Posterior vena cava (tissue), 2 donors: ENCODE measurements at regions of chr9 and their contacts with region 1.

Region 1: DNA sequence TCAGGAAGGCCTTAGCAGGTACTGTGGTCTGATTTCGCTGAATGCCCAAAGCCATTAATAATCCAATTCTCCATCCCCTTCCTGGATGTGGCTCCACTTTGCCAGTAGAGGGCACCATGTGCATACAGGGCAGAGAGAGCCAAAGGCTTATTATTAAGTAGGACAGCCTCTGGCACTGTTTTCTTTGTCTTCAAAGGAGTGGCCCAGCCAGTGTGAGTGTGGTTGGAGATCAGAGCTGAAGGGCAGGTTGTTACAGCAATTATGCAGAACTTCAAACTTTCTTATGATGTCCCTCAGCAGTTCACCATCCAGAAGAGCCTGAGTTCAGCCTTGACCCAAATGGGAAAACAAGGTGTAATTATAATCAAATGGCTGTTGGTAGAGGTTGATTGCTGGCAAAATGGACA is 38.6 kb upstream of the CEMIP2 start:
- DNase-seq: no peak

Region 2: GRCh38 chr9:72005451-72005850 is 198.5 kb after region 1 on chr9:
- intact Hi-C with region 1: no loop called
- DNase-seq: no peak

Region 3: DNA sequence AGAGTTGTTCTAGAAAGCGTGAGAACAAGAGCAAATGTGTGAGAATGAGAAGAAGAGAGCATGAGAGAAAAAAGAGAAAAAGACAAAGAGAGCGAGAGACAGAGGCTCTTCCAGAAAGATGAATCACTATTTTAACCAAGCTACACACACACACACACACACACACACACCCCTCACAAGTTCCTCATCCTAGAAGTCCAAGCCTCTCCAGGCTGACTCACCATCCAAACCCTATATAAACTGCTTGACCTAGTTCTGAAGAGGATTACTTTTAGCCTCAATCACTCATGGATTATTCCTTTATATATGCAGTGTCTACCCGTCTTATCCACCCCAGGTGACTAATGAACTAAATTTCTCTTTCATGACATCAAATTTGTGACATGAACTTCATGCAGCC is 215.9 kb after region 1 on chr9:
- intact Hi-C with region 1: loop called in 1 of 2 experiments (anchors 2 kb)
- DNase-seq: no peak